Posterior cingulate gyrus (tissue), 11 donors: ENCODE measurements at regions of chr20 and their contacts with region 1.

Region 1: DNA sequence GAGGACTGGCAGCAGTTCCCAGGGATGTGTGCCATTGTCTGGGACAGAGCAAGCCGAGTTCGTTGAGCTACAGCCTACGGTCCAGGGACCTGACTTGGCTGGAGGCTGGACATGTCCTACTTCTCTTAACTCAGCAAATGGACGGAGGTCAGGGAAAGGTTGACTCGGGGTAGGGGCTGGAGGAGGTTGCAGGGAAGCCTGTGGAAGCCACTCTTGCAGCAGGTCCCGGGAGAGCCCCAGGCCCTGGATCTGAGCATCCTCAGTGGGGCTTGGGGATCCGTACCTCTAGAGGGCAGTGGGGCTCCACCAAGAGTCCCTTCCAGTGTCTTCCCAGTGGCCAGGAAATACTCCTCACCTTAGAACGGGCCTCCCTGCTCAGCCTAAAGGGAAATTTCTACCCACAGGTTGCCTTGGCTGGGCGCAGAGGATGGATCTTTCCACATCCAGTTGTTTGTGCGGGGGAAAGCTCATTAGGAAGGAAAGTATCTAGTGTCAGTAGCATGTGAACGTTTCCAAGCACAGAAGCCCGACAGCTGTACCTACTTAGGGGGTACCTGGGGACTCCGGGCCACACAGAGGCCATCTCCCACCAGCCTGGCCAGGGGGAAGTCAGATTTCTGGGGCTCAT is 170.2 kb downstream of the NFATC2 start:
- DNase-seq: peak; percentile 36 to 92 (median 60)

Region 2: DNA sequence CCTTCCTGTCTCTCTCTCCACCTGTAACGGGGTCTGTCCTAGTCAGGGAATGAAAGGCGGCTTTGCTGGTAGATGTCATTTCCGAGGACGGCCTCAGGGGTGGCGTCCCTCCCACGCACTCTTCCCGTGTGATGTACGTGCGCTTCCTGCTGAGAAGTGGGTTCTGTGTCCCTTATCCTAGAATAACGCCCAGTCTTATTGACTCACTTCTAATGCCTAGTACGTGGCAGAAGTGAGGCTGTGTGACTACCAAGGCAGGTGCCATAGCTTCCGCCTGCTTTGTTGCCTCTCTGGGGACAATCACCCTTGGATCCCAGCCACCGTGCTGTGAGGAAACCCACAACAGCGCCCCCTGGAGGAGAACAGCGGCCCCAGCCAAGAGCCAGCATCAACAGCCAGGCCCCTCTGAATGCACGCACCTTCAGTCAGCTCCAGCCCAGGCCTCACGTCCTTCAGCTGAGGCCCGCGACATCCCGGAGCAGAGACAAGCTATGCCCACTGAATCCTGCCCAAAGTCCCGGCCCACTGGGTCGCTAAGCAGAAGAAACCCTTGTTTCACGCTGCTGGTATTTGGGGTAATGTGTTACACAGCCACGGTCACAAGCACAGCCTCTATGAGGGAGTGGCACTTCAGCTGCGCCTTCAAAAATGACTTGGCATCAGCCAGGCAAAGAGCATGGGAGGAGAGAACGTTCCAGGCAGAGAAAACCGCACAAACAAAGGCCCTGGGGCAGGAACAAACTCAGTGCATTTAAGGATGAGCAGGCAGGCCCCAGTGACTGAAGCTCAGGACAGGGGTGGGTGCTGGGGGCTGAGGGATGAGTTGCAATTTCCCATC is 54.0 kb before region 1 on chr20:
- intact Hi-C with region 1: loop called (anchors 2 kb)
- DNase-seq: peak in 6 of 10 donors; percentile 27 to 85 (median 36)

Region 3: GRCh38 chr20:51595058-51595532 is 222.8 kb after region 1 on chr20:
- intact Hi-C with region 1: loop called (anchors 1 kb)
- DNase-seq: peak; percentile 79 to 97 (median 86)

Region 4: GRCh38 chr20:51624157-51624731 is 252.0 kb after region 1 on chr20:
- intact Hi-C with region 1: loop called (anchors 1 kb)
- DNase-seq: peak in 9 of 10 donors; percentile 42 to 91 (median 54)

Region 5: GRCh38 chr20:51984931-51985415 is 612.7 kb after region 1 on chr20:
- intact Hi-C with region 1: no loop called
- DNase-seq: no peak